Dendritic cell treated with granulocyte-macrophage colony-stimulating factor and Interleukin-4, amounts not matched to agents 40 ng/mL and 50 ng/mL, for 4 days (primary cell): ENCODE measurements at regions of chr20 and their contacts with region 1.

Region 1: DNA sequence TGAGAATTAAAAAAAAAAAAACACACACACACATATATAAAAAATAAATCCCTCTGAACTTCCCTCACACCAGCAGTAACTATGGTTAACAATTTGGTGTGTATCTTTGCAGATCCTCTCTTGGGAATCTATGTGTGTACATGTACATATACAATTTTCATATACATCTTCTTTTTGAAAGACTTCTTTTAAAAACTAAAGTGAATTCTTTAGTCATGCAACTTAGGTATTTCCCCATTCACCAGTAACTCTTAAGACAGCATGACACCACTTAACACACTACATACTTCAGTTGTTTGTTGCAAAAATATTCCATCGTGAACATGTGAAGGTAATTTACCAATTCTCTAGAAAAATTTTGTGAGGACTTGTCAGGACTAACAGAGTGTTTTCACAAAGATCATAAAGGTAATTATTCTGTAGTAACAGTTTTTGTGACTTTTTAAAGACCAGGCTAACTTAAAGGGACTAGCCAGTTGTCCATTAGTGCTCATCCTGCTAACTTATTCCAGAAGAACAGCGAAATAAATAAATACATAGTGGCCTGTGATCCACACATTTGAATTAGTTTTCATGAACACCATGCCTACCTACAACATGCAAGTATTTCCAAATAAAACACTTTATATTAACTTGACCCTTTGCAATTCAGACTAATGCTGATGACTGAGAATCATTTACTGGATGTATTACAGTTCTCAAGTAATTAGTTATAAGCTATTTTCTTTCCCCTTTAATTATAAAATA is 12.1 kb downstream of the RBM39 start:
- H3K4me3 Mint-ChIP-seq: no peak overlapping the region
- H3K27ac Mint-ChIP-seq: no peak overlapping the region
- H3K4me1 Mint-ChIP-seq: peaks cover 17% of the 10 kb centered on the region
- H3K27me3 Mint-ChIP-seq: no peaks in the 10 kb centered on the region

Region 2: DNA sequence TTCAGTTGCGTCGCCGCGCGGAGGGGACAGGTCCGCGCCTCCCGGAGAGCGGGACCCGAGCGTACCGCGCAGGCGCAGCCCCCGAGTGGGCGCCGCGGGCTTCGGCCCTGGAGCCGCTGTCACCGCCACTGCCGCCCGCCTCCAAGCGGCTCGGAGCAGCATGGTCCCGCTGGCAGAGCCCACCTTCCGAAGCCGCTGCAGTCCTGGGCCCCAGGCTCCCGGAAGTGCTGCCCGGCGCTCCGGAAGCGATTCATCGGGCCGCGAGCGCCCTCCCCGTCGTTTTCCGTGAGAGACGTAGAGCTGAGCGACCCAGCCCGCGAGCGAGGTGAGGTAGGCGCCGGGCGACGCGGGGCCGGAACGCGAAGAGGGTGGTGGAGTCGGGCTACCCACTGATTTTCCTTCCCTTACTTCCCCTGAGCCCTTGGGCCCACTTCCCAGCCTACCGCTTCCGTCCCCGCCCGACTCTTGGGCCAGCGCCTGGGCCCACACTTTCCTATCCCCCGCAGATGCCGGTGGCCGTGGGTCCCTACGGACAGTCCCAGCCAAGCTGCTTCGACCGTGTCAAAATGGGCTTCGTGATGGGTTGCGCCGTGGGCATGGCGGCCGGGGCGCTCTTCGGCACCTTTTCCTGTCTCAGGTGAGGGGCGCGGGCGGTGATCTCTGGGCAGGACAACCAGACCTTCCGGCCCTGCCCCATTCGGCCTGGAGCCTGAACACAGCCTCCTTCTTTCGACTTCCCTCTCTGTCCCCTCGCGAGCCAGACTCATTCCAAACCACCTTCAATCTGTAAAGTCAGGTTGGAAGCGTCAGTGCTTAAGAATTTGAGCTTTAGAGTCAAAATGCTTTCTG is 30.7 kb before region 1 on chr20 and contains the starts of genes NFS1 and ROMO1:
- intact Hi-C with region 1: no loop called
- H3K4me3 Mint-ChIP-seq: peak within 1 kb of the TSS; percentile 99
- H3K27ac Mint-ChIP-seq: peak within 1 kb of the TSS; percentile 99
- H3K4me1 Mint-ChIP-seq: peaks cover 37% of the 10 kb centered on the region
- H3K27me3 Mint-ChIP-seq: no peaks in the 10 kb centered on the region

Region 3: DNA sequence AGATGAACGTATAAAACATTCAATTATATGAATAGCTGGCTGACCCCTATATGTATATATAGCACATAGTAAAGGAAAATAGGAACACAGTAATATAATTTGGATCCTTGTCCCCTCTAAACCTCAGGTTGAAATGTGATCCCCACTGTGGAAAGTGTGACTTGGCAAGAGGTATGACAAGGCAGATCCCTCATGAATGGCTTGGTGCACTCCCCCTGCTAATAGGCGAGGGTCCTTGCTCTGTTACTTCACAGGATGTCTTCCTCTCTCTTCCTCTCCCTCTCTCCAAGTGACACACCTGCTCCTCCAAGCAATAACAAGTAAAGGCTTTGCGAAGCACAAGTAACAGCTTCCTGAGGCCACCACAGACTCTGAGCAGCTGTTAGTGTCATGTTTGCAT is 14.4 kb before region 1 on chr20:
- intact Hi-C with region 1: loop called (anchors 2 kb)
- H3K4me3 Mint-ChIP-seq: no peak overlapping the region
- H3K27ac Mint-ChIP-seq: no peak overlapping the region
- H3K4me1 Mint-ChIP-seq: peaks cover 9% of the 10 kb centered on the region
- H3K27me3 Mint-ChIP-seq: no peaks in the 10 kb centered on the region